GM12878 (cell line): ENCODE measurements at regions of chr1 and their contacts with region 1.

Region 1: DNA sequence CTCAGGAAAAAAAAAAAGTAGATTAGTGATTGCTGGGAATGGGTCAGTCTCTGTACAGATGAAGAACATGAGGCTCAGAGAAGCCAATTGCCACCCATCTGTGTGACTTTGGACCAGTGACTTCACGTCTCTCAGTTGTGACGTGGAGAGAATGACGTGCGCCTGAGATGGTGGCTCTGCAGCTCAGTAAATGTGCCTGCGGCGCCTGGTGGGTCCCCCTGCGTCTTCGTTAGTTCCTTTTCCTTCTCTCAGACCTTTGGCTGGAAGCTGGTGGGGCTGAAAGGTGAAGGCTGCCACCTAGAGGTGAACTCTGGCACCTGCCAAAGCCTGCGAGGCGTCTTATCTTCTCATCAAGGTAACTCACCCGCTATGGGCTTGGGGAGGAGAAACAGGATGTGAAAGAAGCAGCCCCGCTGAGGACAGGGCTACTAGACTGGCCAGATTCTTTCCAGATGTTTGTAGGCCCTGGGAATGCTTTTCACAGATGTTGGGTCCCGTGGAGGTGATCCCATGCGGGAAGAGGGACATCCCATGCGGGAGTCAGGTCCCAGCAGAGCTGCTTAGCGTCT is 8.7 kb upstream of the E2F2 start:
- DNase-seq: peak; percentile 92
- ATAC-seq: peak; percentile 93
- H3K4me3 ChIP-seq: no peak overlapping the region
- H3K27ac ChIP-seq: no peak overlapping the region
- H3K4me1 ChIP-seq: peaks cover 7% of the 10 kb centered on the region
- H3K27me3 ChIP-seq: no peaks in the 10 kb centered on the region
- CTCF ChIP-seq: peak; percentile 96 to 99 (median 99); a peak in 5 of 6 replicates
- EP300 ChIP-seq: peak in 1 of 2 experiments; percentile 33; a peak in 1 of 4 replicates
- POLR2A ChIP-seq: no peak
- RAD21 ChIP-seq: peak; percentile 98

Region 2: GRCh38 chr1:23496490-23497181 is 43.1 kb before region 1 on chr1:
- CTCF ChIA-PET with region 1: interaction called, 784 read pairs
- POLR2A ChIA-PET with region 1: interaction called, 30 read pairs
- RAD21 ChIA-PET with region 1: interaction called, 272 read pairs
- SMC1A ChIA-PET with region 1: interaction called, 258 read pairs
- in situ Hi-C with region 1: loop called (anchors 5 kb)
- intact Hi-C with region 1: loop called (anchors 1 kb)
- DNase-seq: no peak
- ATAC-seq: peak; percentile 26; the same call in 2 of the 3 replicates
- H3K4me3 ChIP-seq: no peak overlapping the region
- H3K27ac ChIP-seq: no peak overlapping the region
- H3K4me1 ChIP-seq: no peaks in the 10 kb centered on the region
- H3K27me3 ChIP-seq: no peaks in the 10 kb centered on the region
- CTCF ChIP-seq: no peak
- EP300 ChIP-seq: no peak
- POLR2A ChIP-seq: no peak
- RAD21 ChIP-seq: no peak

Region 3: GRCh38 chr1:23514111-23514679 is 25.6 kb before region 1 on chr1:
- CTCF ChIA-PET with region 1: interaction called, 20 read pairs
- POLR2A ChIA-PET with region 1: no interaction called
- RAD21 ChIA-PET with region 1: interaction called, 3 read pairs
- SMC1A ChIA-PET with region 1: interaction called, 4 read pairs
- in situ Hi-C with region 1: no loop called
- intact Hi-C with region 1: no loop called
- DNase-seq: no peak
- ATAC-seq: no peak
- H3K4me3 ChIP-seq: no peak overlapping the region
- H3K27ac ChIP-seq: no peak overlapping the region
- H3K4me1 ChIP-seq: no peaks in the 10 kb centered on the region
- H3K27me3 ChIP-seq: no peaks in the 10 kb centered on the region
- CTCF ChIP-seq: no peak
- EP300 ChIP-seq: no peak
- POLR2A ChIP-seq: no peak
- RAD21 ChIP-seq: no peak

Region 4: GRCh38 chr1:23577056-23578004 is 37.5 kb after region 1 on chr1:
- CTCF ChIA-PET with region 1: interaction called, 6 read pairs
- POLR2A ChIA-PET with region 1: interaction called, 8 read pairs
- RAD21 ChIA-PET with region 1: interaction called, 15 read pairs
- SMC1A ChIA-PET with region 1: interaction called, 7 read pairs
- in situ Hi-C with region 1: no loop called
- intact Hi-C with region 1: no loop called
- DNase-seq: peak; percentile 92
- ATAC-seq: peak; percentile 80
- H3K4me3 ChIP-seq: peak overlapping the region; percentile 61; the same call in 1 of the 2 replicates
- H3K27ac ChIP-seq: peak overlapping the region; percentile 96
- H3K4me1 ChIP-seq: peaks cover 53% of the 10 kb centered on the region
- H3K27me3 ChIP-seq: no peaks in the 10 kb centered on the region
- CTCF ChIP-seq: no peak
- EP300 ChIP-seq: peak; percentile 75 to 85; a peak in 3 of 4 replicates
- POLR2A ChIP-seq: 0 out of 2 replicates have a peak, but pooled peaks have one; percentile 20
- RAD21 ChIP-seq: peak; percentile 31; the same call in 1 of the 2 replicates

Region 5: GRCh38 chr1:23619299-23620188 is 79.8 kb after region 1 on chr1:
- CTCF ChIA-PET with region 1: interaction called, 959 read pairs
- POLR2A ChIA-PET with region 1: no interaction called
- RAD21 ChIA-PET with region 1: interaction called, 5 read pairs
- SMC1A ChIA-PET with region 1: interaction called, 8 read pairs
- in situ Hi-C with region 1: no loop called
- intact Hi-C with region 1: no loop called
- DNase-seq: no peak
- ATAC-seq: peak; percentile 82
- H3K4me3 ChIP-seq: peak overlapping the region; percentile 64
- H3K27ac ChIP-seq: peak overlapping the region; percentile 51
- H3K4me1 ChIP-seq: peaks cover 36% of the 10 kb centered on the region
- H3K27me3 ChIP-seq: no peaks in the 10 kb centered on the region
- CTCF ChIP-seq: no peak
- EP300 ChIP-seq: peak; percentile 50 to 67; a peak in 1 of 4 replicates
- POLR2A ChIP-seq: peak; percentile 64
- RAD21 ChIP-seq: no peak

Region 6: DNA sequence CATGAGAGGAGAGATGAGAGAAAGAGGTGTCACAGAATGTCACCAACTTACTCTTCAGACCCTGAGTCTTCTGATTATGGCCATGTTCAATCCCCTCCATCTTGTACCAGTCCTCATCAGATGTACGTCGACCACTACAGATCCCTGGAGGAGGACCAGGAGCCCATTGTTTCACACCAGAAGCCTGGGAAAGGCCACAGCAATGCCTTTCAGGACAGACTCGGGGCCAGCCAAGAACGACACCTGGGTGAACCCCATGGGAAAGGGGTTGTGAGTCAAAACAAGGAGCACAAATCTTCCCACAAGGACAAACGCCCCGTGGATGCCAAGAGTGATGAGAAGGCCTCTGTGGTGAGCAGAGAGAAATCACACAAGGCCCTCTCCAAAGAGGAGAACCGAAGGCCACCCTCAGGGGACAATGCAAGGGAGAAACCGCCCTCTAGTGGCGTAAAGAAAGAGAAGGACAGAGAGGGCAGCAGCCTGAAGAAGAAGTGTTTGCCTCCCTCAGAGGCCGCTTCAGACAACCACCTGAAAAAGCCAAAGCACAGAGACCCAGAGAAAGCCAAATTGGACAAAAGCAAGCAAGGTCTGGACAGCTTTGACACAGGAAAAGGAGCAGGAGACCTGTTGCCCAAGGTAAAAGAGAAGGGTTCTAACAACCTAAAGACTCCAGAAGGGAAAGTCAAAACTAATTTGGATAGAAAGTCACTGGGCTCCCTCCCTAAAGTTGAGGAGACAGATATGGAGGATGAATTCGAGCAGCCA is 211.4 kb after region 1 on chr1:
- CTCF ChIA-PET with region 1: interaction called, 8 read pairs
- POLR2A ChIA-PET with region 1: interaction called, 3 read pairs
- RAD21 ChIA-PET with region 1: interaction called, 4 read pairs
- SMC1A ChIA-PET with region 1: interaction called, 9 read pairs
- in situ Hi-C with region 1: no loop called
- intact Hi-C with region 1: loop called (anchors 2 kb)
- DNase-seq: no peak
- ATAC-seq: peak; percentile 97
- H3K4me3 ChIP-seq: no peak overlapping the region
- H3K27ac ChIP-seq: no peak overlapping the region
- H3K4me1 ChIP-seq: no peaks in the 10 kb centered on the region
- H3K27me3 ChIP-seq: no peaks in the 10 kb centered on the region
- CTCF ChIP-seq: peak; percentile 79 to 86 (median 84)
- EP300 ChIP-seq: no peak
- POLR2A ChIP-seq: no peak
- RAD21 ChIP-seq: peak; percentile 93

Region 7: DNA sequence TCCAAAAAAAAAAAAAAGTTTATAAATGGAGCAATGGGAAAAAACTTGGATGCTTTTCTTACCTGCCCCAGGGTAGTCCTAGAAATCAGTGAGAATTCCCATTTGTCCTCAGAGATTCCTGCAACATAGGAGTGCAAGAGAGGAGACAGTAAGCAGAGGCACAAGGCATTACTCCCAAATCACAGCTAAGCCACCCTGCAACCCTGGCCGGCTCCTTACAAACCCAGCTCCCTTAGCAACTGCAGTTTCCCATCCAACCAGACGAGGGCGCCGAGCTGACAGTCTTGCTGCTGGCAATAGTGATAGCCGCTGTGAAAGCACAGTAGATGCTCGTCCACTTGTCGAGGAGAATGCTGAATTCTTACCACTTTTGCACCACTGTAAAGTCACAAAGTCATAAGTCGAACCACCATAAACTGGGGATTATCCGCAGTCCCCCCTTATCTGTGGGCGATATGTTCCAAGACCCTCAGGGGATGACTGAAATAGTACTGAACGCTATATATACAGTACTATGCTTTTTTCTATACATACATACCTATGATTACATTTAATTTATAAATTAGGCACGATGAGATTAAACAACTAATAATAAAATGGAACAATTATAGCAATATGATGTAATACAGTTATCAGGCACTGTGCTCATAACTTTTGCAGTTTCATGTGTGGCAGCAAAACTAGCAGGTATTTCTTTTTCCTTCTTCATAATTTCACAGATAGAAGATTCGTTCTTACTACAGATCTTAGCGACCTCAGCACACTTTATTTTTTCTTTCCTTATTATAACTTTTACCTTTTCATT is 232.5 kb after region 1 on chr1:
- CTCF ChIA-PET with region 1: no interaction called
- POLR2A ChIA-PET with region 1: no interaction called
- RAD21 ChIA-PET with region 1: no interaction called
- SMC1A ChIA-PET with region 1: no interaction called
- in situ Hi-C with region 1: no loop called
- intact Hi-C with region 1: no loop called
- DNase-seq: peak; percentile 27
- ATAC-seq: peak; percentile 99
- H3K4me3 ChIP-seq: no peak overlapping the region
- H3K27ac ChIP-seq: no peak overlapping the region
- H3K4me1 ChIP-seq: peaks cover 12% of the 10 kb centered on the region
- H3K27me3 ChIP-seq: no peaks in the 10 kb centered on the region
- CTCF ChIP-seq: peak; percentile 97 to 98 (median 98); a peak in 5 of 6 replicates
- EP300 ChIP-seq: no peak
- POLR2A ChIP-seq: no peak
- RAD21 ChIP-seq: peak; percentile 91